Activated naive CD4-positive, alpha-beta T cell treated with anti-CD3 and anti-CD28 coated beads for 36 hours (primary cell): ENCODE measurements at regions of chr19 and their contacts with region 1.

Region 1: DNA sequence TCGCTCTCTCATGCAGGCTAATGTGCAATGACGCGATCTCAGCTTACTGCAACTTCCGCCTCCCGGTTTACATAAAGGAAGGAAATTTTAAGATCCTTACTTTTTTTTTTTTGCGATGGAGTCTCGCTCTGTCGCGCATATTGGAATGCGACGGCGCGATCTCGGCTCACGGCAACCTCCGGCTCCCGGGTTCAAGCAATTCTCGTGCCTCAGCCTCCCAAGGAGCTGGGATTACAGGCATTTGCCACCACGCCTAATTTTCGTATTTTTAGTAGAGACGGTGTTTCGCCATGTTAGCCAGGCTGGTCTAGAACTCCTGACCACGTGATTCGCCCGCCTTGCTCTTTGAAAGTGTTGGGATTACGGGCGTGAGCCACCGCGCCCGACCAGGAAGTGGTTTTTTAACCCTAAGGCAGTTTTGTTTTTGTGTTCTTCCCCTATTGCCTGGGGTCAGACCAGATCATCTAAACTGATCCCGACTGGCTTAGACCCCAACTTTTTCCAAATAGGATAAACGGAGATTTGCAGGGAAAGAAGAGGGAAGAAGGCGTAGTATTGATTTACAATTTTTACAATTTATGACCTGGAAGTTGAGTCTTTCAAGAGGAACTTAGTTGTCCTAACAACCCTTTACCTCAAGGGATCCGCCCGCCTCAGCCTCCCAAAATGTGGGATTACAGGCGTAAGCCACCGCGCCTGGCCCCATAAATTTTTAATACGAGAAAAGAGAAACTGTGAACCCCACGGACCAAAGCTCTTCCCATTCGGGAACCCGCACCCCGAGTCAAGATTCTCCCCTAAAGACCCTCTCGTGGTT is 142.0 kb downstream of the ZNF737 start:
- DNase-seq: peak; percentile 59
- H3K4me3 Mint-ChIP-seq: peak overlapping the region; percentile 94
- H3K27ac Mint-ChIP-seq: peak overlapping the region; percentile 98
- H3K4me1 Mint-ChIP-seq: peaks cover 10% of the 10 kb centered on the region
- H3K27me3 Mint-ChIP-seq: no peaks in the 10 kb centered on the region

Region 2: GRCh38 chr19:19900729-19901444 is 522.7 kb before region 1 on chr19 and contains the start of gene ZNF93:
- CTCF ChIA-PET with region 1: no interaction called
- intact Hi-C with region 1: loop called (anchors 5 kb)
- DNase-seq: peak; percentile 98
- H3K4me3 Mint-ChIP-seq: peak within 1 kb of the TSS; percentile 97
- H3K27ac Mint-ChIP-seq: peak within 1 kb of the TSS; percentile 95
- H3K4me1 Mint-ChIP-seq: peaks cover 28% of the 10 kb centered on the region
- H3K27me3 Mint-ChIP-seq: no peaks in the 10 kb centered on the region
- total RNA-seq, gene ZNF93: 15.2 to 16.6 TPM

Region 3: DNA sequence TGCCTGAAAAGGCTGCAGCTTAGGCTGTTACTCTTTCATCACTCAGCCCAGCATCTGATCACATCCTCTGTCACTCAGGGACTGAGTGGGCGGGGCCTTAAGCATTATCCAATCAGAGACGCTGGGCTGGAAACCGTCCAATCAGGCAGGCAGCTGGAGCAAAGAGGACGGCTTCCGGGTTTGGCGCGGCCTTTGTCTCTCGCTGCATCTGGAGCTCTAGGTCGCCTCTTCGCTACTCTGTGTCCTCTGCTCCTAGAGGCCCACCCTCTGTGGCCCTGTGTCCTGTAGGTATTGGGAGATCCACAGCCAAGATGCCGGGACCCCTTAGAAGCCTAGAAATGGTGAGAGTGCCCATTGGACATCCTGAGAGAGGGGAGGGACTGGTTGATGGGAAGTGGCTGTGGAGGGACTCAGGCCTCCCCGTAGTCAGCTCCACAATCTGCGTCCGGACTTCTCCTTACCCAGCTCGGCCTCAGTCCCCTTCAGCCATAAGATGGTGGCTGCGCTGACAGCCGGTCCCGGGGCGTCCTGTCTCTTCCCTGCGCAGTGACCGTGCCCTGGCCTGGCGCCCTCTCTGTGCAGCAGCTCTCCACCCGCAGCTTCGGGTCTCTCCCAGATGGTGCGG is 256.5 kb before region 1 on chr19 and contains the start of gene ZNF486:
- CTCF ChIA-PET with region 1: no interaction called
- intact Hi-C with region 1: loop called (anchors 10 kb)
- DNase-seq: peak; percentile 98
- H3K4me3 Mint-ChIP-seq: peak within 1 kb of the TSS; percentile 98
- H3K27ac Mint-ChIP-seq: peak within 1 kb of the TSS; percentile 91
- H3K4me1 Mint-ChIP-seq: peaks cover 19% of the 10 kb centered on the region
- H3K27me3 Mint-ChIP-seq: no peaks in the 10 kb centered on the region
- total RNA-seq, gene ZNF486: 11.3 to 13.2 TPM

Region 4: DNA sequence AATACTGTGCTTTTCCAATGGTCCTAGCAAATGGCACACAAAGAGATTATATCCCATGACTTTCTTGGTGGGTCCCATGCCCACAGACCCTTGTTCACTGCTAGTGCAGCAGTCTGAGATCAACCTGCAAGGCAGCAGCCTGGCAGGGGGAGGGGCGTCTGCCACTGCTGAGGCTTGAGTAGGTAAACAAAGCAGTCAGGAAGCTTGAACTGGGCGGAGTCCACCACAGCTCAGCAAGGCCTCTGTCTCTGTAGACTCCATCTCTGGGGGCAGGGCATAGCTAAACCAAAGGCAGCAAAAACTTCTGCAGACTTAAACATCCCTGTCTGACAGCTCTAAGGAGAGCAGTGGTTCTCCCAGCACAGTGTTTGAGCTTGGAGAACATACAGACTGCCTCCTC is 59.1 kb after region 1 on chr19:
- CTCF ChIA-PET with region 1: no interaction called
- intact Hi-C with region 1: no loop called
- DNase-seq: no peak
- H3K4me3 Mint-ChIP-seq: no peak overlapping the region
- H3K27ac Mint-ChIP-seq: no peak overlapping the region
- H3K4me1 Mint-ChIP-seq: peaks cover 14% of the 10 kb centered on the region
- H3K27me3 Mint-ChIP-seq: no peaks in the 10 kb centered on the region

Region 5: GRCh38 chr19:20565321-20566018 is 141.9 kb after region 1 on chr19 and contains the start of gene ZNF737:
- CTCF ChIA-PET with region 1: no interaction called
- intact Hi-C with region 1: loop called (anchors 1 kb)
- DNase-seq: peak; percentile 96
- H3K4me3 Mint-ChIP-seq: peak within 1 kb of the TSS; percentile 94
- H3K27ac Mint-ChIP-seq: peak within 1 kb of the TSS; percentile 96
- H3K4me1 Mint-ChIP-seq: peaks cover 14% of the 10 kb centered on the region
- H3K27me3 Mint-ChIP-seq: no peaks in the 10 kb centered on the region
- total RNA-seq, gene ZNF737: 7.9 to 9.4 TPM

Region 6: GRCh38 chr19:20776083-20777076 is 352.8 kb after region 1 on chr19 and contains the start of gene ZNF66:
- CTCF ChIA-PET with region 1: interaction called, 3 read pairs
- intact Hi-C with region 1: loop called (anchors 5 kb)
- DNase-seq: peak; percentile 98
- H3K4me3 Mint-ChIP-seq: peak within 1 kb of the TSS; percentile 100
- H3K27ac Mint-ChIP-seq: peak within 1 kb of the TSS; percentile 95
- H3K4me1 Mint-ChIP-seq: peaks cover 18% of the 10 kb centered on the region
- H3K27me3 Mint-ChIP-seq: no peaks in the 10 kb centered on the region
- total RNA-seq, gene ZNF66: 3.9 to 4.9 TPM

Region 7: GRCh38 chr19:21082011-21082975 is 658.7 kb after region 1 on chr19 and contains the start of gene ZNF714:
- CTCF ChIA-PET with region 1: no interaction called
- intact Hi-C with region 1: loop called (anchors 10 kb)
- DNase-seq: peak; percentile 93
- H3K4me3 Mint-ChIP-seq: peak within 1 kb of the TSS; percentile 98
- H3K27ac Mint-ChIP-seq: peak within 1 kb of the TSS; percentile 95
- H3K4me1 Mint-ChIP-seq: peaks cover 29% of the 10 kb centered on the region
- H3K27me3 Mint-ChIP-seq: no peaks in the 10 kb centered on the region
- total RNA-seq, gene ZNF714: 21.1 to 23.1 TPM